Activated CD8-positive, alpha-beta memory T cell treated with anti-CD3 and anti-CD28 coated beads, Interleukin-2, amount 10 ng/mL, durations not matched to agents 7 days and 5 days (primary cell): ENCODE measurements at regions of chr2 and their contacts with region 1.

Region 1: GRCh38 chr2:231713730-231714430 is 5.6 kb downstream of the PTMA start:
- DNase-seq: peak; percentile 94
- ATAC-seq: peak; percentile 29
- H3K4me3 Mint-ChIP-seq: peak overlapping the region; percentile 33
- H3K27ac Mint-ChIP-seq: peak overlapping the region; percentile 90
- H3K4me1 Mint-ChIP-seq: peaks cover 27% of the 10 kb centered on the region
- H3K27me3 Mint-ChIP-seq: no peaks in the 10 kb centered on the region

Region 2: DNA sequence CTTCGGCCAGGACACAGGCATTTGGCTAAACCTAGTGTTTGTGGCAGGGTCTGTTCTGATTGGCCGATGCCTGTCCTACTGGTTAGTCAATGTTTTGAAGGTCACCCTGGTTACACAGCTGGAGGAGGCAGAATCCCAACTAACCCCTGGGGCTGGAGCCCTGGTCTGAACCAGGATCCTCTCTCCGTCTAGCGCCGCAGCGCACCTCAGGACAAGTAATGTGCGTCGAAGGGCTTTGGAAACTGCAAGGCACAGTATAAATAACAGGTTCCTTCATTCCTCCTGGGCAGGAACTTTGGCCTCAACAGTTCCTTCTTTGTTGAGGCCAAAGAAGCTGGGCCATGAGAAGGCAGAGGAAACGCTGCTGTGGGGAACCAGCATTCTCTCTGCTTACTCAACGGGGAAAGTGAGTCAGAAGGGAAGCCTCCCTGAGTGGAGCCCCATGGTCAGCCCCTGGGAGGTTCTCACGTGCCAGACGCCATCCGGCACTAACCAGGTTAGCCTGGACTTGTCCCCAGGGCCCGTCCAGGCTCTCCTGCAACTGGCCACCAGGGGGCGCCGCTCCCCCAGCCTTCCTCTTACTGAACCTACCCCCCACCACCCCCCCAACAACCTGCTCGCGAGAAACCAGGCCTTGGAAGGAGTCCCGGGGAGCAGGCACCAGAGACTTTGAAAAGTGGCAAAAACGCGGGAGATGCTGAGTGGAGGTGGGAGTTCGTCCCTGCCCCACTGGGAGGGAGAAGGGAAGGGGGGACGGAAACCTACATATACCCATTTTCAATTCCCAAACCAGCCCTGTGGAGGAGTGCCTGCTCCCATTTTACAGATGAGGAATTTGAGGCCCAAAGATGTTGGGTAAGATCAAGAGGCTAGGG is 101.5 kb before region 1 on chr2:
- CTCF ChIA-PET with region 1: interaction called, 182 read pairs
- DNase-seq: peak; percentile 97
- ATAC-seq: peak; percentile 73
- H3K4me3 Mint-ChIP-seq: peak overlapping the region; percentile 50
- H3K27ac Mint-ChIP-seq: peak overlapping the region; percentile 96
- H3K4me1 Mint-ChIP-seq: peaks cover 32% of the 10 kb centered on the region
- H3K27me3 Mint-ChIP-seq: no peaks in the 10 kb centered on the region

Region 3: DNA sequence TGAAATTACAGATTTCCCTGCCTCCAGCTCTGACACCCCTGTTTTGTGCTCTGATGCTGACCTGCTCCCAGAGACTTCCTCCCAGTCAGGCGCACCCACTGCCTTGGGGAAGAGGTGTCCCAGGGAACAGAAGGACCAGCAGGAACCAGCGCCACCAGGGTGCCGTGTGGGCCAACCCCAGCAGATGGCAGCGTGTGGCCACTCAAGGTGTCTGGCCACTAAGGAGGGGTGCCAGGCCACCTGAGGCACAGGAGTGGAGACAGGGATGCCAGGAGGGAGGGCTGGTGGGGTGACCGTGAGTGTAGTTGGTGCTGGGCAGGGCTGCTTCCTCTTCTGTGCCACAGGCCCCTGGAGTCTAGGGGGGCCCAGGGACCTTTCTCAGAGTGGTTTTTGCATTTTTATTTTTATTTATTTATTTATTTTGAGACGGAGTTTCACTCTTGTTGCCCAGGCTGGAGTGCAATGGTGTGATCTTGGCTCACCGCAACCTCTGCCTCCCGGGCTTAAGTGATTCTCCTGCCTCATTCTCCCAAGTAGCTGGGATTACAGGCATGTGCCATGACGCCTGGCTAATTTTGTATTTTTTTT is 65.2 kb before region 1 on chr2:
- CTCF ChIA-PET with region 1: interaction called, 17 read pairs
- DNase-seq: peak; percentile 72
- ATAC-seq: peak; percentile 92
- H3K4me3 Mint-ChIP-seq: no peak overlapping the region
- H3K27ac Mint-ChIP-seq: no peak overlapping the region
- H3K4me1 Mint-ChIP-seq: no peaks in the 10 kb centered on the region
- H3K27me3 Mint-ChIP-seq: peaks cover 6% of the 10 kb centered on the region

Region 4: GRCh38 chr2:231696007-231696371 is 17.9 kb before region 1 on chr2:
- CTCF ChIA-PET with region 1: interaction called, 680 read pairs
- DNase-seq: no peak
- ATAC-seq: no peak
- H3K4me3 Mint-ChIP-seq: no peak overlapping the region
- H3K27ac Mint-ChIP-seq: no peak overlapping the region
- H3K4me1 Mint-ChIP-seq: no peaks in the 10 kb centered on the region
- H3K27me3 Mint-ChIP-seq: no peaks in the 10 kb centered on the region

Region 5: DNA sequence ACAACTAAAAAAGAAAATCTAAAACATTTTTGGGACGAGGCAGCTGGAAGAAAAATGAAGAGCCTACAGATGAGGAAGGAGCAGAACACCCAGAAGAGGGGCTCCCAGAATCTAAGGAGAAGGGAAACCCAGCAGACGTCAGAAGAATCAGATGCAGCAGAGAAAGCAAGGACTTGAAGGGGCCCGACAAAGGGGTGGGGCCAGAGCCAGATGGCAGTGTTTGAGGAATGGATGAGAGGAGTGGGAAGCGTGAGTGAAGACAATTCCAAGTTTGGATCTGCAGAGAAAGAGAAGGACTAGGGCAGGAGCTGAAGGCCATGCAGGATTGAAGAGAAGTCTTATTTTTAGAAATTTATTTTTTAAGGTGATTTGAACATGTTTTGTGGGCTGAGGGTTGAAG is 13.7 kb after region 1 on chr2:
- CTCF ChIA-PET with region 1: interaction called, 16 read pairs
- DNase-seq: no peak
- ATAC-seq: no peak
- H3K4me3 Mint-ChIP-seq: no peak overlapping the region
- H3K27ac Mint-ChIP-seq: no peak overlapping the region
- H3K4me1 Mint-ChIP-seq: no peaks in the 10 kb centered on the region
- H3K27me3 Mint-ChIP-seq: no peaks in the 10 kb centered on the region

Region 6: DNA sequence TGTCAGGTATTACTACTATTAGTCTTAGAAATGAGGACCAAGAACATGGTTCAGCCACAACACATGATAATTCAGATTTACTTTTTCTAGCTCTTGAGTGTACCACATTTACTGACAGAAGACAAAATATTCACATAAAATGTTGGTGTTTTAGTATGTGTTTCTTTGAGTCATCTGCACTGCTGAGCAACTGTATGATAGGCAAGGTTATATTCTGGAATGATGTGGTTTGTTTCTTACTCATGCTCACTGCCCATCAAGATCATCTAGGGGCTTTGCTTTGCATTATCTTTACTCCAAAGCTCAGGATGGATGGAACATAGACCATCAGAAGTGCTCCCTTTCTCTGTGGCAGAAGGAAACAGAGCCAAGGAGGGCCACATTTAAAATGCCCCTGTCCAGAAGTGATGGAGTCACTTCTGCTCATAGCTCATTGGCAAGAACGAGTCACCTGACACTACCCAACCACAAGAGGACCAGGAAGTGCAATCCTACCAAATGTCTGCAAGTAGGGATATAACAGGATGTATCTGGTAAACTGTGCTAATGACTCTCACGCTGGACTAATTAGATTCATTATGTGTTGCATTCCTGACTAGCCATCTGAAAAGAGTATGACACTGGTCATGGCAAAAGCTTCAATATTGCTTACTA is 329.2 kb after region 1 on chr2:
- CTCF ChIA-PET with region 1: no interaction called
- DNase-seq: no peak
- ATAC-seq: no peak
- H3K4me3 Mint-ChIP-seq: no peak overlapping the region
- H3K27ac Mint-ChIP-seq: no peak overlapping the region
- H3K4me1 Mint-ChIP-seq: peaks cover 11% of the 10 kb centered on the region
- H3K27me3 Mint-ChIP-seq: no peaks in the 10 kb centered on the region